T-cell (primary cell): ENCODE measurements at regions of chr1 and their contacts with region 1.

Region 1: DNA sequence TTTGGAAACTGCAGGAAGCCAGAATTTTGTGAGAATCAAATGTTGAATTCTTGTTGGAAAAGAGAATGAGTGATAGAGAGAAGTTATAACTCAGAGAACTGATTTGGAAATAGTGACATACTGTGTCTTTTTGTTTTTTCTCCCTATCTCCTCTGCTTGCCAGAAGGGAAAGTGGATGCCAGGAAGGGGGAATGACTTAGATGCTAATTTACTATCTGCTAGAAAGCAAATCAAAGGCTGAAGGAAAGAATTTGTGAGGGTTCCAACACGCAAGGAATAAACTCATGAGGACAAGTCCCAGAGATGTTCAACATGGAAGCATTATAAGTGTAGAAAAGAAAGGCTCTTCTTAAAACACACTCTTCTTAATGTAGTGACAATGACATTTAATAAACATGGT is 20.5 kb upstream of the LRRC39 start:
- DNase-seq: no peak
- ATAC-seq: no peak
- H3K4me3 ChIP-seq: no peak overlapping the region
- H3K4me3 Mint-ChIP-seq: no peak overlapping the region
- H3K27ac ChIP-seq: no peak overlapping the region
- H3K27ac Mint-ChIP-seq: no peak overlapping the region
- H3K4me1 ChIP-seq: no peaks in the 10 kb centered on the region
- H3K4me1 Mint-ChIP-seq: peaks cover 0 to 2% (median under 1%) of the 10 kb centered on the region in 3 donors
- H3K27me3 ChIP-seq: no peaks in the 10 kb centered on the region
- H3K27me3 Mint-ChIP-seq: no peaks in the 10 kb centered on the region

Region 2: GRCh38 chr1:100184536-100184935 is 14.1 kb before region 1 on chr1:
- CTCF ChIA-PET with region 1: no interaction called
- POLR2A ChIA-PET with region 1: interaction called in 1 of 2 experiments, 11 read pairs
- DNase-seq: no peak
- ATAC-seq: no peak
- H3K4me3 ChIP-seq: no peak overlapping the region
- H3K4me3 Mint-ChIP-seq: no peak overlapping the region
- H3K27ac ChIP-seq: no peak overlapping the region
- H3K27ac Mint-ChIP-seq: no peak overlapping the region
- H3K4me1 ChIP-seq: no peaks in the 10 kb centered on the region
- H3K4me1 Mint-ChIP-seq: no peaks in the 10 kb centered on the region
- H3K27me3 ChIP-seq: no peaks in the 10 kb centered on the region
- H3K27me3 Mint-ChIP-seq: no peaks in the 10 kb centered on the region